Dorsolateral prefrontal cortex (tissue), 120 donors: ENCODE measurements at regions of chr16 and their contacts with region 1.

Region 1: GRCh38 chr16:87492721-87493607 is at the start of gene ZCCHC14:
- DNase-seq: peak; percentile 97 to 100 (median 99)
- H3K4me3 ChIP-seq: peak within 1 kb of the TSS; percentile 49 to 76 (median 64)
- H3K27ac ChIP-seq: peak within 1 kb of the TSS in 43 of 59 donors; percentile 8 to 81 (median 58)
- H3K27me3 ChIP-seq: no peaks in the 10 kb centered on the region
- CTCF ChIP-seq: peak in 14 of 56 donors; percentile 7 to 46 (median 17)
- total RNA-seq, gene ZCCHC14: 25.1 to 60.3 (median 37.0) TPM

Region 2: GRCh38 chr16:87316923-87317749 is 175.8 kb before region 1 on chr16 and contains the start of gene C16orf95:
- intact Hi-C with region 1: loop called (anchors 5 to 10 kb)
- DNase-seq: peak; percentile 93 to 98 (median 97)
- H3K4me3 ChIP-seq: peak within 1 kb of the TSS; percentile 68 to 100 (median 93)
- H3K27ac ChIP-seq: peak within 1 kb of the TSS; percentile 67 to 98 (median 94)
- H3K27me3 ChIP-seq: no peaks in the 10 kb centered on the region
- CTCF ChIP-seq: peak; percentile 37 to 79 (median 62)
- total RNA-seq, gene C16orf95: 3.5 to 15.9 (median 8.1) TPM

Region 3: DNA sequence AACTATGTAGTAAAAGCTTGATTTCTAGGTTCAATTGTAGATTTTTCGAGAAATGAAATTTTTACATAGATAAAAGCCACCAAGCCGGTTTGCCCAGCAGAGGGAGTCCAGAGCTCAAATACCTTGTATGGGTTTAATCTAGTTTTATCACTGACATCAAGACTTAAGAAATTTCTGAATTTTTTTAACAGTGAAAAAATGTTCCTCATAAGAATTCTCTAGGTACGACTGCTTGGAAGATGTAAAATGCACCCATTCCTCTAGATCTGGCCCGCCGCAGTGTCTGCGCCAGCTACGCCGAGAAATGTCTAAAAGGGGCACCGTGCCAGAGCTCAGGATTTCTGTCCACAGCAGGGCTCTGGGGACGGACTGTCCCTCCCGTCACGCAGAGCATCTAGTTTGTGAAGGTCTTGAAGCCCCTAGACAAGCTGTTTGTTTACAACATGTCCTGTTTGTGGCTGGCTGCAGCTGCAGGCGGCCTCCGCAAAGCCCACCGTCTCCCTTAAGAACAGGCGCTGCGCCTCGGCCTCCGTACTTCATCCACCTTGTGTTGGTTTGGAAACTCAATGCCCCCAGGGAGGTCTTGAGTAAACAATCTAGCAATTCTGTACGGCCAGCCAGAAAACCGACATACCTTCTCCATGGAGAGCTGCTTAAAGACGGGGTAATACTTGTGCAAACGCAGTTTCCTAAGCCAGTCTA is 76.0 kb before region 1 on chr16:
- intact Hi-C with region 1: loop called in 1 of 2 experiments (anchors 2 kb)
- DNase-seq: peak in 5 of 10 donors; percentile 27 to 66 (median 61)
- H3K4me3 ChIP-seq: no peak overlapping the region
- H3K27ac ChIP-seq: peak overlapping the region in 10 of 59 donors; percentile 2 to 82 (median 47)
- H3K27me3 ChIP-seq: no peaks in the 10 kb centered on the region
- CTCF ChIP-seq: peak; percentile 47 to 85 (median 73)

Region 4: DNA sequence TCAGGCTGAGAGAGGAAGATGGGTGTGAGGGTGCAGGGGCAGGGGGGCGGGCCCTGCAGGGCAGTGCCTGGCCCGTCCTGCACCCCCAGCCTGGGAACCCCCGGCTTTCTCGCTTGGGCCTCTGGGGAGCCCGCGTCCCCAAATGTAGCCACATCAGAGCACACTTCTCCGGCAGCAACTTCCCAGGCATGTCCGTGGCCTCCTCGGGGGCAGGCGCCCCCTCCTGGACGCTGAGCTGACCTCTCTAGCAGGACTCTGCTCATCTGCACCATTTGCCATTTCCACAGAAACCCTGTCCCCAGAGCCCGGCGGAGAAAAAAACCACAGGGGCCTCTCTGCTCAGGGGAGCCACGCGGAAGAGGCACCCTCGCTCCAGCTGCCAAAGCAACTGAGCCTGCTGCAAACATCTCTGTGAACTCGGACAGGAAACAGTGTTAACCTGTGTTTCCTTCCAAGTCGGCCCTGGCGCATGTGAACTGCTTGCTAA is 209.4 kb after region 1 on chr16:
- intact Hi-C with region 1: no loop called
- DNase-seq: no peak
- H3K4me3 ChIP-seq: no peak overlapping the region
- H3K27ac ChIP-seq: peak overlapping the region in 7 of 59 donors; percentile 0 to 62 (median 32)
- H3K27me3 ChIP-seq: no peaks in the 10 kb centered on the region
- CTCF ChIP-seq: peak in 37 of 56 donors; percentile 4 to 45 (median 24)